ENCODE measurements at regions of chrX and their contacts with region 1.

Region 1: DNA sequence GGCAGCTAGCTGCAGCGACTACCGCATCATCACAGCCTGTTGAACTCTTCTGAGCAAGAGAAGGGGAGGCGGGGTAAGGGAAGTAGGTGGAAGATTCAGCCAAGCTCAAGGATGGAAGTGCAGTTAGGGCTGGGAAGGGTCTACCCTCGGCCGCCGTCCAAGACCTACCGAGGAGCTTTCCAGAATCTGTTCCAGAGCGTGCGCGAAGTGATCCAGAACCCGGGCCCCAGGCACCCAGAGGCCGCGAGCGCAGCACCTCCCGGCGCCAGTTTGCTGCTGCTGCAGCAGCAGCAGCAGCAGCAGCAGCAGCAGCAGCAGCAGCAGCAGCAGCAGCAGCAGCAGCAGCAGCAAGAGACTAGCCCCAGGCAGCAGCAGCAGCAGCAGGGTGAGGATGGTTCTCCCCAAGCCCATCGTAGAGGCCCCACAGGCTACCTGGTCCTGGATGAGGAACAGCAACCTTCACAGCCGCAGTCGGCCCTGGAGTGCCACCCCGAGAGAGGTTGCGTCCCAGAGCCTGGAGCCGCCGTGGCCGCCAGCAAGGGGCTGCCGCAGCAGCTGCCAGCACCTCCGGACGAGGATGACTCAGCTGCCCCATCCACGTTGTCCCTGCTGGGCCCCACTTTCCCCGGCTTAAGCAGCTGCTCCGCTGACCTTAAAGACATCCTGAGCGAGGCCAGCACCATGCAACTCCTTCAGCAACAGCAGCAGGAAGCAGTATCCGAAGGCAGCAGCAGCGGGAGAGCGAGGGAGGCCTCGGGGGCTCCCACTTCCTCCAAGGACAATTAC is 1.4 kb downstream of the AR start:
- DNase-seq: no peak

Region 2: DNA sequence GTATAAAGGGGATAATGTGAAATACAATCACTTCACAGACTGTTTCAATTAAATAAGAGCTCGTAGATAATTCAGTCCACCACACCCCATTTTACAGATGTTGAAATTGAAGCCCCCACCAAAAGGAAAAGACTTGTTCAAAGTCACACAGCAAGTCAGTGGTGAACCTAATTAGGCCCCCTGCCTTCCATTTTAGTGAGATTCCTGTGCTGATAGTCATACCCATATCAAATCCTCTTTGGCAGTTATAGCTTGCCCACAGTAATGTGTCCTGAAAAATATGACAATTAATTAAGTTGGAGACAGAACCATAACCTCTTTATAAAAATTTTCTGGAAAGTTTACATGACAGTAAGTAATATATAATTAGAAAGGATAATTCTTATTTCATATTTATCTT is 56.5 kb after region 1 on chrX:
- intact Hi-C with region 1: no loop called
- DNase-seq: no peak

Region 3: DNA sequence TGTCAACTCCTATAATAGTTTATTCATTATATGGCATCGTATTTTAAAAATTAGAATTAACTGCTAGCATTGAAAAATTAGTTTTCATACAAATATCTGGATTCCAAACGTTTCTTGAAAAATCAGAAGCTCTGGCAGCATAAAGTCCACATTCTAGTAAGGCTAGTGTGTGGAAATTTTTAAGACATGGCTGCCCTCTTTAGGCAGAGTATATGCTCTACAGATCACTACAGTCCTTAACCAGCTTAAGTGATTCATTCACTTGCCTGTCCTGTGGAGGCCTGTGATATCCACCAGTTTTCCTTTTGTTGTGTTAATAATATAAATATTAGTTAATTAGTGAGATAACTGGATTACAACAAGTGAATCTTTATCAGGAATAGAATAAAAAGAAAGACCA is 600.8 kb after region 1 on chrX:
- intact Hi-C with region 1: loop called in 1 of 2 experiments (anchors 5 kb)
- DNase-seq: no peak